ENCODE measurements at regions of chr6 and their contacts with region 1.

Region 1: DNA sequence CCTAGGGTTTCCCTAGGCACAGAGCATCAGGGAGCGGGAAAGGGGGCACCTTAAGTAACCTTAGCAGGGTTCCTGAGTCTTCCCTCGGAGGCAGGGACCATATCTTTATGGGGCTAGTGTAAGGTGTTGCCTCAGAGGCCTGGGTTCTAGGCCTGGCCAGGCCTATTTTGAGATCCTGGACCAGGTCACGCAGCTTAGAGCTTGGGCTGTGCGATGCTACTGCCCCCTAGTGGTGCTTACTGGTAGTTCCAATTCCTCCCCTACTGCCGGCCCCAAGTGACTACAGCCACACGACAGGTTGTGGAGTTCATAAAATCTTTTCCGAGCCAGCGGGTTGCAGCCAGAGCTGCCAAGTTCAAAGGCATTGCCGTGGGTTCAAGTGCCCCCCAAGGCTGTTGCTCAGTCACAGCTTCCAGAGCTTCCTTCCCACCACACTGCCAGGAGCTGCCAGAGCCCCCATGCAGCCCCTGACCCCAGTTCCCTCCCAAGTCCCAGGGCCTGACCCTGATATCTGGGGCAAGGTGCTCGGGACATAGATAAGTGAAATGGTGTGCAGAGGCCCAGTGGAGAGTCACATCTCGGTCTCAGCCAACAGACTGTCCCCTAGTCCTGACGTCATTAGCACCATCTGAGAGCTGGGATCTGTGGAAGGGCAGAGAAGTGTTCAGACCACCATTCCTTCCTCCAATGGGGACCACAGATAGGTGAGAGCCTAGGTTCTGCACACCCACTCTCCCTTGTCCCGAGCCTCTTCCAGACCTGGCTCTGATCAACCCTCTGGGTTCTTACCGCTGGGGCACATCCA is 3.3 kb downstream of the LRRC73 start:
- DNase-seq: peak; percentile 92
- H3K4me3 Mint-ChIP-seq: no peak overlapping the region
- H3K27ac Mint-ChIP-seq: no peak overlapping the region
- H3K4me1 Mint-ChIP-seq: peaks cover 16% of the 10 kb centered on the region
- H3K27me3 Mint-ChIP-seq: peaks cover 27% of the 10 kb centered on the region
- CTCF ChIP-seq: peak; percentile 99

Region 2: DNA sequence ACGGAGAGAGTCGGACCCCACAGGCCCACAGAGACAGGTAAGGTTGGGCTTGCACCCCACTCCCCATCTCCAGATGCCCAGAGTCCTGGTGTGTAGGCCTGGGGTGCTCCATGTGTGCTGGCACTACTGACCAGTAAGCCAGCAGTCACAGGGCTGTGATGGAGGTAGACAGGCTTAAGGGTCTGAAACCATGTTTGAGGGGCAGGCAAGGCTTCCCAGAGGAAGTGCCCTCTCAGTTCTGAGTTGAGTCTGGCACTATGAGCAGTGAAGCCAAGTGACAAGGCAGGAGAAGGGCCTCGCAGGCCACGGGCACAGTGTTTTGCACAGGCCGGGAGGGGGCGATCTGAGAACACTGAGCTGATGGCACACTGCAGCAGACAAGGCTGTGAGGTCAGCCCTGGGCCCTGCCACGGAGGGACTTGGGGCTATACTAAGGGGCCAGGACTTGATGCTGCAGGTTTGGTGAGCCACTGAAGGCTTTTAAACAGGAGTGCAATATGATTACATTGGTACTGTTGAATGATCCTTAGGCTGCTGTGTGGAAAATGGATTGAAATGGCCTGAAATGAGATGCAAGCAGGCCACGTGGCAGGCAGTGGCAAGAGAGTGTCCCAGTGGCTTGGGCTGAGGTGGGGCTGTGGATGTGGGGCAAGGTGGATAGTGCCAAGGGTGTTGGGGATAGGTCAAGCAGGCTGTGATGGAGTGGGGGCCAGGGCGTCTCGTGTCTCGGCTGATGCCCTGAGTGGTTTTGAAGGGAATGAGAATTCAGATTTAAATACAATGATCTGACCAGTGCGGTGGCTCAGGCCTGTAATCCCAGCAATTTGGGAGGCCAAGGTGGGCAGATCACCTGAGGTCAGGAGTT is 243.3 kb before region 1 on chr6:
- CTCF ChIA-PET with region 1: interaction called, 3 read pairs
- intact Hi-C with region 1: loop called (anchors 2 kb)
- DNase-seq: peak; percentile 94
- H3K4me3 Mint-ChIP-seq: no peak overlapping the region
- H3K27ac Mint-ChIP-seq: no peak overlapping the region
- H3K4me1 Mint-ChIP-seq: peaks cover 10% of the 10 kb centered on the region
- H3K27me3 Mint-ChIP-seq: peaks cover 25% of the 10 kb centered on the region
- CTCF ChIP-seq: peak; percentile 81